ENCODE measurements at regions of chr4 and their contacts with region 1.

Region 1: DNA sequence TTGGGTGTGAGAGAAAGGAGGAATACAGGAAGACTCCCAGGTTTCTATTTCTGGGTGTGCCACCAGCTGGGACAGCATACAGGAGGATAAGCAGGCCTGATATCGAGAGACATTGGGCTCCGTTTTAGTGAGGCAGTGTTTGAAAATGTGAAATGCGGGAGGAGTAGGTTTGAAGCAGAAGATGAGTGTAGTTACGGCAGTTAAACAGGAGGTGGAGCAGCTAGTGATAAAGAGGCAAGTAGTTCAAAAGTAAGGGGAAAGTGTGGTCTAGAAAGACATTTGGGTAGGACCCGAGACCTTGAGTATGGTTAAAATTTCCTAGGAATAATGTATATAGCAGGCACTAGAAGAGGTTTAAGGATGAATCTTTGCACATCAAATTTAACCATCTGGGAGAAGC is 42.4 kb downstream of the DCUN1D4 start:
- DNase-seq: no peak
- ATAC-seq: no peak
- H3K4me3 Mint-ChIP-seq: no peak overlapping the region
- H3K27ac Mint-ChIP-seq: no peak overlapping the region
- H3K4me1 Mint-ChIP-seq: no peaks in the 10 kb centered on the region
- H3K27me3 Mint-ChIP-seq: no peaks in the 10 kb centered on the region
- CTCF ChIP-seq: no peak

Region 2: DNA sequence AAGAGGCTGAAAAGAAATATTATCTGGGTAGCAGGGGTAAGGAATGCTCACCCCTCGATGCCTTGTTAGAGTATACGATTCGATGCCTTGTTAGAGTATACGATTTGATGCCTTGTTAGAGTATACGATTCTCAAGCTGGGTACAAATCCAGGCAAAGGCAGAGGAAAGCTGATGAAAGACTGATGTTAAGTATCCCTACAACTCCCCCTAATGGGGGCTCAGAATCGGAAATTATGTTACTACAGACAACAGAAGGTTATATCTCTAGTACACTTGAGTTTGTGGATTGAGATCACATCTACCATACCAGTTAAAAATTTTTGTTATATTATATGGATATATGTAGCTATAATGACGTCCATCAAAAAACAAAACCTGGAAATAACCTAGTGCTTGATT is 130.0 kb after region 1 on chr4:
- CTCF ChIA-PET with region 1: no interaction called
- POLR2A ChIA-PET with region 1: no interaction called
- intact Hi-C with region 1: no loop called
- DNase-seq: no peak
- ATAC-seq: no peak
- H3K4me3 Mint-ChIP-seq: no peak overlapping the region
- H3K27ac Mint-ChIP-seq: no peak overlapping the region
- H3K4me1 Mint-ChIP-seq: peaks cover 5% of the 10 kb centered on the region
- H3K27me3 Mint-ChIP-seq: no peaks in the 10 kb centered on the region
- CTCF ChIP-seq: no peak

Region 3: GRCh38 chr4:52028969-52029368 is 143.6 kb after region 1 on chr4:
- CTCF ChIA-PET with region 1: no interaction called
- POLR2A ChIA-PET with region 1: no interaction called
- intact Hi-C with region 1: loop called (anchors 1 kb)
- DNase-seq: no peak
- ATAC-seq: no peak
- H3K4me3 Mint-ChIP-seq: no peak overlapping the region
- H3K27ac Mint-ChIP-seq: no peak overlapping the region
- H3K4me1 Mint-ChIP-seq: no peaks in the 10 kb centered on the region
- H3K27me3 Mint-ChIP-seq: no peaks in the 10 kb centered on the region
- CTCF ChIP-seq: no peak

Region 4: DNA sequence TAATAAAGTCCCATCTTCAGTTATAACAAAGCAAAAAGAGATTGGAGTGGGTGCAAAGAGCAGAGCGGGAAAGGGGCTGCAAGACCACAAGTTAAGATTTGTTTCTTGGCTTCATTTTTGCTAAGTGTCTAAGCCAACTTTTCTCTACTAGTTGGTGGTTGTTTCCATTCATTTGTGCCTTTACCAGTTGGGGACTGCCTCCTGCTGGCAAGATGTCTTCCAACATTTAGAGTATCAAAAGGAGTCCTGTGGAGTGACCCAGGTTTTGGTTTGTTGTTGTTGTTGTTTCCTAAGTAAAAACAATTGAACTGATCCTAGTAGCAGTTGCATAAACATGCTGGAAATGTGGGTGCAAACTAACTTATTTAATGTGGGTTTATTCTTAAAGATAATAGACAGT is 286.8 kb after region 1 on chr4:
- CTCF ChIA-PET with region 1: no interaction called
- POLR2A ChIA-PET with region 1: no interaction called
- intact Hi-C with region 1: loop called (anchors 1 kb)
- DNase-seq: no peak
- ATAC-seq: no peak
- H3K4me3 Mint-ChIP-seq: no peak overlapping the region
- H3K27ac Mint-ChIP-seq: no peak overlapping the region
- H3K4me1 Mint-ChIP-seq: no peaks in the 10 kb centered on the region
- H3K27me3 Mint-ChIP-seq: no peaks in the 10 kb centered on the region
- CTCF ChIP-seq: no peak

Measured in activated B cell treated with CpG ODN at 0.5 μM for 24 hours (primary cell).